Activated T-helper 1 cell treated with anti-CD3 and anti-CD28 coated beads, Interleukin-12 subunit alpha, Interleukin-12 subunit beta, Interleukin-2, Interleukin-4 antibody, amounts not matched to agents 30 ng/mL and 10 ng/mL and 1 ng/mL, durations not matched to agents 14 hours and 24 hours and 36 hours (primary cell): ENCODE measurements at regions of chr9 and their contacts with region 1.

Region 1: DNA sequence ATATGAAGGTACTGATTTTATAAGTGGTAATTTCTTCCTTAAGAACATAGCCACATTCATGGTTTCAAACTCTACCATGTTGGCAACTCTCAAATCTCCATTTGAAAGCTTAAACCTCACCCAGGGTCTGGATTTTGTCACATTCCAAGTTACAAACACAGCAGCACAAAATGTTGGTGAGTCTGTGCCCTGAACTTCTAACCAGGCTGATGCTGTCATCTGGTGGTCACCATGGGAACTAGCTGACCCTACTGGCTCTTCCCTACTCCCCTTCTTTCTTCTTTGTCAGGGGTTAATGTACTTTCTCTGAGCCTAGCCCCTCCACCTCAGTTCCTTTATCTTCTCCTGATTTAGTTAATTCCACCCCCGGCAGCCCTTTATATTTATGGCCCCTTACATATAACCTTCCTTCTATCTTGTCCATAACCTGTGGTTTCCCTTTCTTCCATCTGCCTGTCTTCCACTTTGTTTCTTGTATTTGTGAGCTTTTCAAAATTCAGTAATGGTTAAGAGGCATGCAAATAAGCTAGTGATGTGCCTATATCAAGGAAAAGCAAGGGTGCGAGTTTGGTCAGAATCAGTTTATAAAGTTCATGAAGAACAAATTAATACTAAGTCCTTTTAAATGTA is 35.9 kb downstream of the TGFBR1 start:
- DNase-seq: no peak
- H3K4me3 Mint-ChIP-seq: no peak overlapping the region
- H3K27ac Mint-ChIP-seq: peak overlapping the region; percentile 9
- H3K4me1 Mint-ChIP-seq: peaks cover 37% of the 10 kb centered on the region
- H3K27me3 Mint-ChIP-seq: no peaks in the 10 kb centered on the region

Region 2: DNA sequence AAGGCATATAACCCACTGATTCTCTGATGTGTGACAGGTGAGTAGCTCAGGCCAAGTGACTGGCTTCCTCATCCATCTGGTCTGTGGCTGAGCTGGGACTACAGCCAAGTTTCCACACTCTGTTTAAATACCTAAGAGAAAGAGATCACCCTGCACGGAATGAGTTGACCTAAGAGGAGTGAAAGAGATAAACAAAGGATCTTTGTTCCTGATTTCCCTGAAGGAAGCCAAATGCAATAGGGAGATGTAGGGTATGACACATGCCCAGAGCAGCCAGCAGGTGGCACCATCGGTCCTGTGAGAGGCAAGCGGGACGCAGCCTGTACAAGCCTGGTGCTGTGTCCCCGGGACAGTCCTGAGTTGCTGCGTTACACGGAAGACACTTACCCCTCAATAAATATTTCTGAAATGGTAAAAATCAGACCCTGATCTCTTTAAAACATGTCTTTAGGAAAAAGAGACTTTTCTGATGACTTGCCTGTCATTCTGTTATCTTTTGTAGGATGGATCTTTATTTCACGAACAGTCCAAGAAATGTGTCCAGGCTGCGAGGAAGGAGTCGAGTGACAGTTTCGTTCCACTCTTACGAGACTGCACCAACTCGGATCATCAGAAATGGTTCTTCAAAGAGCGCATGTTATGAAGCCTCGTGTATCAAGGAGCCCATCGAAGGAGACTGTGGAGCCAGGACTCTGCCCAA is 292.2 kb before region 1 on chr9:
- intact Hi-C with region 1: loop called (anchors 1 kb)
- DNase-seq: peak; percentile 57
- H3K4me3 Mint-ChIP-seq: no peak overlapping the region
- H3K27ac Mint-ChIP-seq: no peak overlapping the region
- H3K4me1 Mint-ChIP-seq: peaks cover 10% of the 10 kb centered on the region
- H3K27me3 Mint-ChIP-seq: no peaks in the 10 kb centered on the region

Region 3: DNA sequence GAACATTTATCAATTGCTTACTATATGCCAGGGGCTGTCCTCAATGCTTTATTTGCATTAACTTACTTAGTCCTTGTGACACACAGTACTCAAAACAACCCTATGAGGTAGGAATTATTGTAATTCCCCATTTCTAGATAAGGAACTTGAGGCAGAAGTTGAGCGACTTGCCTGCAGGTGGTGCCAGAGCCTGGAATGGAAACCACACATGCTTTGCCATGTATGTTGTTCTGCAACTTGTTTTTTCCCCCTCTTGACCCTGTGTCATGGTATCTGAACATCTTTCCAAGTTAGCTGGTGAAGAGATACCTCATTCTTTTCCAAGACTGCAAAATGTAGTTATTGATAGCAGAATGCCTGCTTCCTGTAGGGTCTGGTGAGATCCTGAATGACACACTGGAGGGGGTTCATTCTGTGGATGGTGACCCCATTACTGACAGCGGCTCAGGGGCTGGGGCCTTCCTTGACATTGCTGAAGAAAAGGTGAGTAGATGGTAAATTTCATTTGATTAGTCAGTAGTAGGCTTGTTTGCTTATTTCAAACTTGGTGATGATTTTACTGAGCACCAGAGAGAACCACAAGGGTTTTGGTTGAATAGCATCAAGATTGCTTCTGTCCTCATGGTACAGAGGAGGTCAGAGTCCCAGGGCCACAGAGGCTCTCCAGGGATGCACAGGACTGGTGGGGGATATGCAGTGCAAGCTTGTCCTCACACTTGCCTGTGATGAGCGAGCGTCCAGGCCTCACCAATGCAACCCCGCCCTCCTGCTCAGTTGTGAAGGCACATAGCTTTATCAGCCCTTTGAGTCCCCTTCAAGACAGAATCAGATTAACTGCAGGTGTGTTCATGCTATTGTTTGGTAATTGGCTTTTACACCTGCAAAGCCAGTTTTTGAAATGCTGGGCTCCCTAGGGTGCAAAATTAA is 140.1 kb before region 1 on chr9:
- intact Hi-C with region 1: loop called (anchors 1 kb)
- DNase-seq: peak; percentile 44
- H3K4me3 Mint-ChIP-seq: no peak overlapping the region
- H3K27ac Mint-ChIP-seq: no peak overlapping the region
- H3K4me1 Mint-ChIP-seq: peaks cover 27% of the 10 kb centered on the region
- H3K27me3 Mint-ChIP-seq: peaks cover 16% of the 10 kb centered on the region